AG04450 (cell line): ENCODE measurements at regions of chr1 and their contacts with region 1.

Region 1: GRCh38 chr1:31815752-31816500 is at the start of gene SPOCD1:
- DNase-seq: peak; percentile 48
- H3K4me3 ChIP-seq: peak within 1 kb of the TSS; percentile 42
- H3K27ac ChIP-seq: no peak within 1 kb of the TSS
- H3K27me3 ChIP-seq: no peaks in the 10 kb centered on the region
- CTCF ChIP-seq: peak; percentile 91
- polyA plus RNA-seq, gene SPOCD1: 78.8 and 98.5 TPM in 2 replicates

Region 2: GRCh38 chr1:31789259-31790065 is 26.5 kb before region 1 on chr1:
- CTCF ChIA-PET with region 1: interaction called, 10 read pairs
- POLR2A ChIA-PET with region 1: no interaction called
- DNase-seq: peak; percentile 80
- H3K4me3 ChIP-seq: peak overlapping the region; percentile 87
- H3K27ac ChIP-seq: peak overlapping the region; percentile 81
- H3K27me3 ChIP-seq: no peaks in the 10 kb centered on the region
- CTCF ChIP-seq: peak; percentile 94

Region 3: GRCh38 chr1:31805318-31805717 is 10.6 kb before region 1 on chr1:
- CTCF ChIA-PET with region 1: interaction called, 19 read pairs
- POLR2A ChIA-PET with region 1: no interaction called
- DNase-seq: no peak
- H3K4me3 ChIP-seq: no peak overlapping the region
- H3K27ac ChIP-seq: no peak overlapping the region
- H3K27me3 ChIP-seq: no peaks in the 10 kb centered on the region
- CTCF ChIP-seq: no peak

Region 4: DNA sequence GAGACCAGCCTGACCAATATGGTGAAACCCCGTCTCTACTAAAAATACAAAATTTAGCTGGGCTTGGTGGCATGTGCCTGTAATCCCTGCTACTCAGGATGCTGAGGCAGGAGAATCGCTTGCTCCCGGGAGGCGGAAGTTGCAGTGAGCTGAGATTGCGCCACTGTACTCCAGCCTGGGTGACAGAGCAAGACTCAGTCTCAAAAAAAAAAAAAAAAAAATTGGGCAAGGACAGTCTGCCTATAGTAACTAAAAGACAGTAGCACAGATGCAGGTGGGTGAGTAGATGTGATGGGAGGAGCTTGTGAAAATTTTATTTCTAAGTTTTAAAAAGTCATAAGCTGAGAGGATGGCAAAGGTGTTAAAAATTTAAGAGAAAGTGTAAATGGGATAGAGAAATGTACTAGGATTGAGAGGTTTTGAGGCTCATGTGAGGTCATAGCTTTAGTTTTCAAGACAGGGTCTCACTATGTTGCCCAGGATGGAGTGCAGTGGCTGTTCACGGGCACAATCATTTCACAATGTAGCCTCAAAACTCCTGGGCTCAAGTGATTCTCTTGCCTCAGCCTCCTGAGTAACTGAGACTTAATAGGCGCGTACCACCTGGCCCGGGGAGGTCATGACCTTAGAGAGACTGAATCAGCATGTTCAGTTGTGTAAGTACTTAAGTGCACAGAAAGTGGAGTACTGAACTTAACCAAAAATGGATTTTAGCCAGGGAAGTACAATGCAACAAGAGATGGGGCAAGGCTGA is 88.6 kb after region 1 on chr1:
- CTCF ChIA-PET with region 1: interaction called, 4 read pairs
- POLR2A ChIA-PET with region 1: interaction called, 13 read pairs
- DNase-seq: no peak
- H3K4me3 ChIP-seq: no peak overlapping the region
- H3K27ac ChIP-seq: no peak overlapping the region
- H3K27me3 ChIP-seq: no peaks in the 10 kb centered on the region
- CTCF ChIP-seq: no peak